GM23248 (cell line): ENCODE measurements at regions of chr18 and their contacts with region 1.

Region 1: DNA sequence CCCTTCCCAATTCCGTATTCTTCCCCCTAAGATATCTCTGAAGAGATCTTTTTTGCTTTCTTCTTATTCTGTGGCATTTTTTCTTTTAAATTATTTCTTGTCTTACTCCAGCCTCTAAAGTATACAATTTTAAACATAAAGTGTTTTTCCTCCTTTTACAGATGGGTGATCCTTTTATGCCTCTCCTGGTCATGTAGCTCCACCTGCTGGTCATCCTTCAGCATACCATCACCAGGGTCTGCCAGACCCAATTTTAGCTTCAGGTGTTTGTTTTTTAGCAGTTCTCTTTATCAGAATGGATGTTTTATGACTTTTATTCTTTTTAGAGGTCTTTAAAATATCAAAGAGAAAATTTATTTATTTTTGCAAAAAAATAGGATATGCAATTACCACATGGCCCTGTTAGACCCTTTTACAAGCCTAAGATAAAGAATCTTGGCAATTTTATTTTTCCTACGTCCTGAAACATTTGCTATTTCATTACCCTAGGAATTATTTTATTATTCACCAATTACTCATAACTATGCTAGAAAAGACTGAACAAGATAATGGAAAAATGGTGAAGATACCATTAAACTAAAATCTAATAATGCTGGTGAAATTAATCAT is 55.5 kb downstream of the PIGN start:
- DNase-seq: peak; percentile 71
- H3K4me3 ChIP-seq: no peak overlapping the region
- H3K27ac ChIP-seq: no peak overlapping the region
- H3K4me1 ChIP-seq: peaks cover 15% of the 10 kb centered on the region
- H3K27me3 ChIP-seq: no peaks in the 10 kb centered on the region

Region 2: GRCh38 chr18:61333746-61334490 is 797.5 kb before region 1 on chr18:
- in situ Hi-C with region 1: loop called (anchors 25 kb)
- DNase-seq: peak; percentile 44
- H3K4me3 ChIP-seq: peak overlapping the region; percentile 69
- H3K27ac ChIP-seq: no peak overlapping the region
- H3K4me1 ChIP-seq: peaks cover 11% of the 10 kb centered on the region
- H3K27me3 ChIP-seq: peaks cover 6% of the 10 kb centered on the region; the same call in 1 of the 2 replicates

Region 3: GRCh38 chr18:61569176-61569892 is 562.1 kb before region 1 on chr18:
- in situ Hi-C with region 1: loop called (anchors 10 kb)
- DNase-seq: peak; percentile 76
- H3K4me3 ChIP-seq: no peak overlapping the region
- H3K27ac ChIP-seq: peak overlapping the region; percentile 77
- H3K4me1 ChIP-seq: peaks cover 17% of the 10 kb centered on the region
- H3K27me3 ChIP-seq: no peaks in the 10 kb centered on the region

Region 4: GRCh38 chr18:62080172-62080905 is 51.1 kb before region 1 on chr18:
- in situ Hi-C with region 1: no loop called
- DNase-seq: no peak
- H3K4me3 ChIP-seq: no peak overlapping the region
- H3K27ac ChIP-seq: no peak overlapping the region
- H3K4me1 ChIP-seq: no peaks in the 10 kb centered on the region
- H3K27me3 ChIP-seq: no peaks in the 10 kb centered on the region